Activated T-helper 2 cell treated with anti-CD3 and anti-CD28 coated beads, Interferon-gamma antibody, Interleukin-2, Interleukin-4, amounts not matched to agents 10 μg/mL and 5 μg/mL and 100 μg/mL, durations not matched to agents 14 hours and 24 hours and 36 hours (primary cell): ENCODE measurements at regions of chr6 and their contacts with region 1.

Region 1: DNA sequence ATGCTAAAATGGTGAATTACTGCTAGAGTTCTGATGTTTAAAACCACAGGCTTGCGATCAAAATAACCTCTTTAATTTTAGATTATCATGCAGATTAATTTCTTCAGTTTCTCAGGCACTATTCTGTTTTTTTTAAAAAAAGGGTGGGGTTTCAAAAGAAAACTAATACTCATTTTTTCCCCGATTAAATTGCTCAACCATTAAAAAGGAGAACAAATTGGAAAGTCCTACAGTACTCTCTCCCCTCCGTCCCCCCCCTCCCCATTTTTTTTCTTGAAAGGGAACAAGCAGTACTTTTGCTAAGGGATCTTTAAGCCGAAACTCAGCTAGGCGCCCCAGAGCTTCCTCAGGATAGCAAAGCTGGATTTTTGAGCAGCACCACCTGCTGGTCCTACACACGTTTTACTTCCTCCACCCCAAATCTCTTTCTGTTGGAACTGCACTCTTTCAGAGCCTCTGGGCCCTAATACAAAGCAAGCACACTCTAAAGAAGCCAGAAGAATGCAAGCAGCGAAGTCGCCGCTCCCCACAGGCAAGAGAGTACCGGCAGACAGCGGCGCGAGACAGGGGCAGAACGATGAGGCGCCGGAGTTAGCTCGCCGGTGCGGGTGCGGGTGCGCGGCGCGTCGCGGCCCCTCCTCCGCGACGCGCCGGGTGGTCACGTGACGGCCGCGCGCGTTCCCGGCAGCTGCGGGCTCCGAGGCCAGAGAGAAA is at the start of gene RNF146:
- DNase-seq: peak; percentile 69
- H3K4me3 Mint-ChIP-seq: peak within 1 kb of the TSS; percentile 97
- H3K27ac Mint-ChIP-seq: peak within 1 kb of the TSS; percentile 99
- H3K4me1 Mint-ChIP-seq: peaks cover 28% of the 10 kb centered on the region
- H3K27me3 Mint-ChIP-seq: peaks cover 16% of the 10 kb centered on the region
- total RNA-seq, gene RNF146: 18.7 and 19.1 TPM in 2 replicates

Region 2: GRCh38 chr6:127022302-127022701 is 244.0 kb before region 1 on chr6:
- intact Hi-C with region 1: no loop called
- DNase-seq: no peak
- H3K4me3 Mint-ChIP-seq: no peak overlapping the region
- H3K27ac Mint-ChIP-seq: no peak overlapping the region
- H3K4me1 Mint-ChIP-seq: no peaks in the 10 kb centered on the region
- H3K27me3 Mint-ChIP-seq: no peaks in the 10 kb centered on the region

Region 3: DNA sequence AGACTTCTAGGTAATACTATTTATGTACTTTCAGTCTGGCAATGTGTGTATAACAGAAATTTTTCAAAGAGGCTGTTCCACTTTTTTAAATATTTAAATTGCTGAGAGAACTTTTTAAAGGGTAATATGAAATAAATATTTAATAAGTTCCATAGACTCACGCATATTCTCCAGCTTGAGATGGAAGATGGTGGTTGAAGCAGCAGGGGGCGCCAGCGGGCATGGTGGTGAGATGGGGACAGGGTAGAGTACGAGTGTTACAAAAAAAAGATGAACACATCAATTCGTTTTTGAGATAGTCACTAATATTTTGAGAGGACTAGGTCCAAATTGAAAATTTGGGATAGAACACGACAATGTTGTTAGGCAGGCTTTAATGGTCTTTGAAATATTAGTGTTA is 79.4 kb before region 1 on chr6:
- intact Hi-C with region 1: loop called (anchors 1 kb)
- DNase-seq: peak; percentile 33
- H3K4me3 Mint-ChIP-seq: no peak overlapping the region
- H3K27ac Mint-ChIP-seq: no peak overlapping the region
- H3K4me1 Mint-ChIP-seq: no peaks in the 10 kb centered on the region
- H3K27me3 Mint-ChIP-seq: peaks cover 23% of the 10 kb centered on the region

Region 4: GRCh38 chr6:127249621-127250020 is 16.7 kb before region 1 on chr6:
- intact Hi-C with region 1: no loop called
- DNase-seq: no peak
- H3K4me3 Mint-ChIP-seq: no peak overlapping the region
- H3K27ac Mint-ChIP-seq: no peak overlapping the region
- H3K4me1 Mint-ChIP-seq: no peaks in the 10 kb centered on the region
- H3K27me3 Mint-ChIP-seq: peaks cover 4% of the 10 kb centered on the region

Region 5: DNA sequence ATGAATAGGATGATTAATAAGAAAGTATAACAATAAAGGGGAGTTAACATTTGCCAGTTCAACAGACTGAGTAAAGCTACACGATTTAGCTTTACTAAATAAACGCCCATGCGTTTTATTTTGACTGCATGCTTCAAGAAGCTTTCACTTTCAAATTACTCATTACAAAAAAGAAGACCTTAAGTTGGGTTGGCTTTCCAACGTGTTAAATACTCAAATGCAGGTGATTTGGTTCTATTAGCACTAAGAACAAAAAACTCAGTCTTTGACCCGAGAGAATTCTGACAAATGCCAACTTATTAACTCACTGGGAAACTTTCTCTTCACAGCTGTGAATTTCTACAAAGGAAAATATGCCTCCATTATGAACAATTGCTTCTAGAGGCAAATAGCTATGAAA is 25.2 kb after region 1 on chr6:
- intact Hi-C with region 1: loop called (anchors 2 kb)
- DNase-seq: no peak
- H3K4me3 Mint-ChIP-seq: no peak overlapping the region
- H3K27ac Mint-ChIP-seq: peak overlapping the region; percentile 48
- H3K4me1 Mint-ChIP-seq: peaks cover 40% of the 10 kb centered on the region
- H3K27me3 Mint-ChIP-seq: no peaks in the 10 kb centered on the region

Region 6: DNA sequence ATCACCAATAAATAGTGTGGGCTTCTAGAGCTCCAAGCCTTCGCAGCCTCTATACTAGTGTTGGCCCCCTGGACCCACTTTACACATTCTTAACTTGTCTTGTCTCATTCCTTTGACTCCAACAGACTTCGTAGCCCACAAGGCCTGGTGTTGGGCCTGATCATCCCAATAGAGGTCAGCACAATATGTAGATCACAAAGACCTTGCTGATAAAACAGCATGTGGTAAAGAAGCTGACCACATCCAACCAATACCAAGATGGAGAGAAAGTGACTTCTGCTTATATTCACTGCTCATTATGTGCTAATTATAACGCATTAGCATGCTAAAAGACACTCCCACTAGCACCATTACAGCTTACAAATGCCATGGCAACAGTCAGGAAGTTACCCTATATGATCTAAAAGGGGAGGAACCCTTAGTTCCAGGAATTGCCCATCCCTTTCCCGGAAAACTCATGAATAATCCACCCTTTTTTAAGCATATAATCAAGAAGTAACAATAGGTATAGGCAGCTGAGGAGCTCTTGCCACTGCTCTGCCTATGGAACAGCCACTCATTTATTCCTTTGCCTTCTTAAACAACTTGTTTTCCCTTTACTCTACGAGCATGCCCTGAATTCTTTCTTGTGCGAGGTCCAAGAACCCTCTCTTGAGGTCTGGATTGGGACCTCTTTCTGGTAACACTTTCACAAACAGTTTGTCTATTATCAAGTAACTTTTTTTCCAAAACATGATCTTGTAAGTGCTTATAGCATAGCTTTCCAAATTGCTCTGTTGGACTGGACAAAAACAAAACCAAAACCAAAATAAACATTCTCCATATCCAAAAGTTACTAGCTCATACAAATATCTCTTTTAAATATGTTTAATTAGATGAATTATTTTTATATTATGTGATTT is 131.6 kb after region 1 on chr6:
- intact Hi-C with region 1: no loop called
- DNase-seq: no peak
- H3K4me3 Mint-ChIP-seq: no peak overlapping the region
- H3K27ac Mint-ChIP-seq: no peak overlapping the region
- H3K4me1 Mint-ChIP-seq: peaks cover 4% of the 10 kb centered on the region
- H3K27me3 Mint-ChIP-seq: no peaks in the 10 kb centered on the region